Gastrocnemius medialis (tissue), 4 donors: ENCODE measurements at regions of chr12 and their contacts with region 1.

Region 1: GRCh38 chr12:88889326-88890110 is 309.2 kb upstream of the KITLG start:
- DNase-seq: no peak
- ATAC-seq: no peak
- H3K4me3 ChIP-seq: no peak overlapping the region
- H3K27ac ChIP-seq: no peak overlapping the region
- H3K4me1 ChIP-seq: peaks cover 8 to 11% of the 10 kb centered on the region in 2 donors
- H3K27me3 ChIP-seq: no peaks in the 10 kb centered on the region
- CTCF ChIP-seq: no peak
- POLR2A ChIP-seq: no peak

Region 2: GRCh38 chr12:88960213-88960878 is 70.8 kb after region 1 on chr12:
- in situ Hi-C with region 1: no loop called
- intact Hi-C with region 1: no loop called
- DNase-seq: no peak
- ATAC-seq: peak; percentile 74 to 93
- H3K4me3 ChIP-seq: no peak overlapping the region
- H3K27ac ChIP-seq: peak overlapping the region in 3 of 4 donors; percentile 23 to 70 (median 35)
- H3K4me1 ChIP-seq: peaks cover 7 to 9% of the 10 kb centered on the region in 2 donors
- H3K27me3 ChIP-seq: no peaks in the 10 kb centered on the region
- CTCF ChIP-seq: no peak
- POLR2A ChIP-seq: no peak

Region 3: GRCh38 chr12:88977115-88977514 is 87.6 kb after region 1 on chr12:
- in situ Hi-C with region 1: loop called in 1 of 4 experiments (anchors 5 kb)
- intact Hi-C with region 1: no loop called
- DNase-seq: no peak
- ATAC-seq: no peak
- H3K4me3 ChIP-seq: no peak overlapping the region
- H3K27ac ChIP-seq: no peak overlapping the region
- H3K4me1 ChIP-seq: no peaks in the 10 kb centered on the region
- H3K27me3 ChIP-seq: no peaks in the 10 kb centered on the region
- CTCF ChIP-seq: no peak
- POLR2A ChIP-seq: no peak

Region 4: GRCh38 chr12:89019408-89020120 is 130.0 kb after region 1 on chr12:
- in situ Hi-C with region 1: no loop called
- intact Hi-C with region 1: no loop called
- DNase-seq: peak; percentile 55 to 59
- ATAC-seq: peak; percentile 90 to 92
- H3K4me3 ChIP-seq: peak overlapping the region; percentile 21 to 42 (median 36)
- H3K27ac ChIP-seq: no peak overlapping the region
- H3K4me1 ChIP-seq: peaks cover 0 to 6% of the 10 kb centered on the region in 2 donors
- H3K27me3 ChIP-seq: no peaks in the 10 kb centered on the region
- CTCF ChIP-seq: peak; percentile 48 to 83 (median 77)
- POLR2A ChIP-seq: no peak